ENCODE measurements at regions of chr7 and their contacts with region 1.

Region 1: DNA sequence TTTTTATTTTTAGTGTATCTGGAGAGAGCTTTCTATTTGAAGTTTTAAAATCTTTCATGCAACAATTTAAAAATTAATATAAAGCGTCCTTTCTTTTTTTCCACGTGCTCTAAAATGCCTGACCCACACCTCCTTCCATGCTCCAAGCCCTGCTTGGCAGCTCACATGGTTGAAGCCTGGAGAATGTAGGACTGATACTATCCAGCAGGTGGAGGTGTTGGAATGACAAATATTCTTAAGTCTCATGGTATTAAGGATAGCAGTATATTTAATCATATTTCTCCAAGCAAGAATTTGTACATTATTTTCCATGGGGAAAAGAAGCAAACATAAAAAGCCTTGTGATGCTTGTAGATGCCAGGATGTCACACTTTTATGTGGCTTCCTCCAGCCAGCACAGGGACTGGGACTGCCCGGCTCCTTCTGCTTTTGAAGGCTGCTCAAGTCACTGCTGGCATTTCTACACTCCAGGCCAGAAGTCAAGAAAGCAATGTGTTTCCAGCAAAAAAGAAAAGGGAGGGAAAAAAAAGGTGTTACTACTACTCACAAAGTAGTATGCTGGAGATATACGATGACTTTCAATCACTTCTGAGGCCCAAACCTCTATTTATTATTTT is 49.7 kb downstream of the BZW2 start:
- DNase-seq: peak; percentile 14
- H3K4me3 ChIP-seq: no peak overlapping the region
- H3K27ac ChIP-seq: no peak overlapping the region
- H3K4me1 ChIP-seq: no peaks in the 10 kb centered on the region
- H3K27me3 ChIP-seq: no peaks in the 10 kb centered on the region
- CTCF ChIP-seq: peak; percentile 37 to 68 (median 56)
- EP300 ChIP-seq: no peak
- POLR2A ChIP-seq: no peak

Region 2: GRCh38 chr7:16399265-16399831 is 296.4 kb before region 1 on chr7:
- in situ Hi-C with region 1: no loop called
- intact Hi-C with region 1: no loop called
- DNase-seq: no peak
- H3K4me3 ChIP-seq: no peak overlapping the region
- H3K27ac ChIP-seq: no peak overlapping the region
- H3K4me1 ChIP-seq: no peaks in the 10 kb centered on the region
- H3K27me3 ChIP-seq: no peaks in the 10 kb centered on the region
- CTCF ChIP-seq: no peak
- EP300 ChIP-seq: no peak
- POLR2A ChIP-seq: no peak

Region 3: DNA sequence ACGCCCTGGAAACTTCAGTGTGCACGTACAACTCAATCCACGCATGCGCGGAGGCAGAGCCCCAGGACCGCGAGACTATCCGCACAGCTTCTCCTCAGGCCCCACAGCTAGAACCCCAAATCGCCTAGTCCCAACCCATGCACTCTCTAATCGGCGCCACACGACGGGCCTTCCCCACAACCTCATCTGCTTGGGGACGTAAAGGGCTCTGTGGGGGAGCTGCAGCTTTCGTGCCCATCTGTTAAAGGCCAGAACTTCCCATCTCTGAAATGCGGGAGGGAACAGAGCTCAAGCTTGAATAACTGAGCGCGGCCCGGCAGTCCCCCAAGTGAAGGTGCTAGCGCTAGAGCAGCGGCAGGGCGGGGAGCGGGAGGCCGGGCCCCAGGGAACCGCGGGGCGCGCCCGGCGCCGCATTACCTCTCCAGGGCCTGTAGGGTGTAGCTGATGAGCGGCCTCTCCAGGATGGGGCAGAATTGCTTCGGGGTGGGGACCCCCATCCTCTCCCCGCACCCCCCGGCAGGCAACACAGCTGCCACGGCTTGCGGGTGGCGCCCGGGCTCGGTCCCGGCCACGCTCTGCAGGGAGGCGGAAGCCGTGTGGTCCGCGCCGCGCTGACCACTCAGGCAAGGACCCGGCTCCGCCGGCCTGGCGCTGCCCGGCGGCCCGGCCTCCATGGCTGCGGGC is 274.9 kb before region 1 on chr7:
- in situ Hi-C with region 1: no loop called
- intact Hi-C with region 1: no loop called
- DNase-seq: peak; percentile 89
- H3K4me3 ChIP-seq: peak overlapping the region; percentile 59 to 69 (median 63)
- H3K27ac ChIP-seq: peak overlapping the region; percentile 96 to 98 (median 97)
- H3K4me1 ChIP-seq: peaks cover 13 to 26% (median 17%) of the 10 kb centered on the region in 4 donors
- H3K27me3 ChIP-seq: no peaks in the 10 kb centered on the region
- CTCF ChIP-seq: peak; percentile 35 to 68 (median 43)
- EP300 ChIP-seq: no peak
- POLR2A ChIP-seq: peak; percentile 93

Region 4: GRCh38 chr7:16712916-16713315 is 17.2 kb after region 1 on chr7:
- in situ Hi-C with region 1: no loop called
- intact Hi-C with region 1: no loop called
- DNase-seq: no peak
- H3K4me3 ChIP-seq: no peak overlapping the region
- H3K27ac ChIP-seq: no peak overlapping the region
- H3K4me1 ChIP-seq: no peaks in the 10 kb centered on the region
- H3K27me3 ChIP-seq: no peaks in the 10 kb centered on the region
- CTCF ChIP-seq: no peak
- EP300 ChIP-seq: no peak
- POLR2A ChIP-seq: no peak

Region 5: DNA sequence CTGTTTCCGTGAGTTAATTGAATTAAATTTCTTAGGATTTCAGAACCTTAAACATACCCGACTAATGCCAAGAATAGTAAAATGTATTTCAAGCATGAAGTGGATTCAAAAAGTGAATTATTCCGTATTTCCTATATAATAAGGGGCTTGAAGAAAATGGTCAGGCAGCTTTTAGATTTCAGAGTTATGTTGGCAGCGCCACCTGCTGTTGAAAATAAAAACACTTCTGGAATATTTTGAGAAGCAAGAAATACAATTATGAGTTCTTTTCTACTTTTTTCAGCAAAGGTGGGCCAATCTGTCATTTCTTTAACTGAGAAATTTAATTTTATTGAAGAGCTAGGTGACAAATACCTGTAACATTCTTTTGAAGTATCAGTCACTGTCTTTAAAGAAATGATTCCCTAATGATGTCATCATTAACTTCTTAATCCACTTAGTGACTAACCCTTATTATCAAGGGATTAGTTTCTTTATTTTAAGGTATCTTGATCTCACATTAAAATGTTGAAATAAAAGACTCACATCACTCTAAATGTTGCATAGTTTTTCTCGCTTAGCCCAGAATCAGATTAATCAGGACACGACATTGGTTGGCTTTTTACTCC is 222.7 kb after region 1 on chr7:
- in situ Hi-C with region 1: loop called in 3 of 4 experiments (anchors 10 to 25 kb)
- intact Hi-C with region 1: no loop called
- DNase-seq: no peak
- H3K4me3 ChIP-seq: no peak overlapping the region
- H3K27ac ChIP-seq: no peak overlapping the region
- H3K4me1 ChIP-seq: peaks cover 0 to 33% (median 14%) of the 10 kb centered on the region in 4 donors
- H3K27me3 ChIP-seq: no peaks in the 10 kb centered on the region
- CTCF ChIP-seq: peak; percentile 69 to 79 (median 76)
- EP300 ChIP-seq: no peak
- POLR2A ChIP-seq: no peak

Measured in transverse colon (tissue), 4 donors.